Ovary (tissue), 10 donors: ENCODE measurements at regions of chr16 and their contacts with region 1.

Region 1: GRCh38 chr16:57194512-57194911 is 8.4 kb downstream of the RSPRY1 start:
- DNase-seq: no peak
- H3K4me3 ChIP-seq: no peak overlapping the region
- H3K27ac ChIP-seq: no peak overlapping the region
- H3K4me1 ChIP-seq: peaks cover 6% of the 10 kb centered on the region
- H3K27me3 ChIP-seq: no peaks in the 10 kb centered on the region
- CTCF ChIP-seq: no peak
- EP300 ChIP-seq: no peak
- POLR2A ChIP-seq: no peak

Region 2: GRCh38 chr16:57141822-57142631 is 52.5 kb before region 1 on chr16:
- intact Hi-C with region 1: no loop called
- DNase-seq: peak in 2 of 5 donors; percentile 5 to 8
- H3K4me3 ChIP-seq: no peak overlapping the region
- H3K27ac ChIP-seq: no peak overlapping the region
- H3K4me1 ChIP-seq: no peaks in the 10 kb centered on the region
- H3K27me3 ChIP-seq: no peaks in the 10 kb centered on the region
- CTCF ChIP-seq: no peak
- EP300 ChIP-seq: no peak
- POLR2A ChIP-seq: no peak

Region 3: DNA sequence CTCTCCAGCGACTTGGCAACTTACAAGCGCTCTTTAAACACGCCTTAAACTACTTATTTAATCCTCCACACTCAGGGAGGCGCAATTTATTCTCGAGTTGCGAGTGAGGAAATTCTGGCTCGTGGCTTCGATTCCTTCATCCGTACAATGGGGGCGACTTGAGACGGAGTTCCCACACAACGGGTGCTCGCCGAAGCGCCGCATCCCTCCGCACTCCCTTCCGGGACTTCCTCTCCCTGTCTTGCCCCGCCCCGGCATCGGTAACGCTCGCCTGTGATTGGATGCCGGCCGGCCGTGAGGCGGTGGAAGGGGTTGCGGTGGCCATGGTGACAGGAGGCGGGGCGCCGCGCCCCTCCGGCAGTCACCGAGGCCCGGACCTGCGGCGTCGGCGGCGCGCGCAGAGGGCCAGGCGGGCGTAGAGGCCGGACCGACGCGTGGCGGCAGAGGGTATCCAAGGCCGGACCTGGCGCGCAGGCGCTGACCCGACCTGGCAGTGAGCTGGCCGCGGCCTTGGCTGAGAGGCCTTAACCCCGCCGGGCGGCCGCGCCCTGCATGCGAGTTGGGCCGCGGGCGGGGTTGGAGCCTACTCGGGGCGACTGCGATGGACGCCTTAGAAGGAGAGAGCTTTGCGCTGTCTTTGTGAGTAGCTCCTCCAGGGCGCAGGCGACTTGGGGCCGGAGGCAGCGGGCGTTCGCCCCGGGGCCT is 50.4 kb after region 1 on chr16 and contains the start of gene ARL2BP:
- intact Hi-C with region 1: loop called in 1 of 4 experiments (anchors 5 kb)
- DNase-seq: peak; percentile 97 to 99 (median 98)
- H3K4me3 ChIP-seq: peak within 1 kb of the TSS; percentile 84
- H3K27ac ChIP-seq: peak within 1 kb of the TSS; percentile 22 to 80
- H3K4me1 ChIP-seq: peaks cover 3% of the 10 kb centered on the region
- H3K27me3 ChIP-seq: no peaks in the 10 kb centered on the region
- CTCF ChIP-seq: no peak
- EP300 ChIP-seq: no peak
- POLR2A ChIP-seq: peak; percentile 64
- total RNA-seq, gene ARL2BP: 50.0 to 74.3 (median 57.7) TPM

Region 4: DNA sequence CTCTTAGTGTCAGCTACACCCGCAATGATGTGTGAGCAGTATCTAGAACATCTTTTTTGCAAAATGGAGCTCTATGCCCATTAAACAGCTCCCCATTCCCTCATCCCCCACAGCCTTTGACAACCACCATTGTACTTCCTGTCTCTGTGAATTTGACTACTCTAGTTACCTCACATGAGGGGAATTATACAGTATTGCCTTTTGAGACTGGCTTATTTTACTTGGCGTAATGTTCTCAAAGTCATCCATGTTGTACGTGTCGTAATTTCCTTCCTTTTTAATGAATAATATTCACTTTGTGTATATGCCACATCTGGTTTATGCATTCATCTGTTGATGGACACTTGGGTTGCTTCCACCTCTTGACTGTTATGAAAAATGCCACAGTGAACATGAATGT is 140.9 kb after region 1 on chr16:
- intact Hi-C with region 1: no loop called
- DNase-seq: no peak
- H3K4me3 ChIP-seq: no peak overlapping the region
- H3K27ac ChIP-seq: no peak overlapping the region
- H3K4me1 ChIP-seq: no peaks in the 10 kb centered on the region
- H3K27me3 ChIP-seq: no peaks in the 10 kb centered on the region
- CTCF ChIP-seq: no peak
- EP300 ChIP-seq: no peak
- POLR2A ChIP-seq: no peak